Activated CD4-positive, alpha-beta T cell treated with anti-CD3 and anti-CD28 coated beads, Interleukin-2, amount 10 ng/mL, durations not matched to agents 24 days and 14 days (primary cell): ENCODE measurements at regions of chr11 and their contacts with region 1.

Region 1: DNA sequence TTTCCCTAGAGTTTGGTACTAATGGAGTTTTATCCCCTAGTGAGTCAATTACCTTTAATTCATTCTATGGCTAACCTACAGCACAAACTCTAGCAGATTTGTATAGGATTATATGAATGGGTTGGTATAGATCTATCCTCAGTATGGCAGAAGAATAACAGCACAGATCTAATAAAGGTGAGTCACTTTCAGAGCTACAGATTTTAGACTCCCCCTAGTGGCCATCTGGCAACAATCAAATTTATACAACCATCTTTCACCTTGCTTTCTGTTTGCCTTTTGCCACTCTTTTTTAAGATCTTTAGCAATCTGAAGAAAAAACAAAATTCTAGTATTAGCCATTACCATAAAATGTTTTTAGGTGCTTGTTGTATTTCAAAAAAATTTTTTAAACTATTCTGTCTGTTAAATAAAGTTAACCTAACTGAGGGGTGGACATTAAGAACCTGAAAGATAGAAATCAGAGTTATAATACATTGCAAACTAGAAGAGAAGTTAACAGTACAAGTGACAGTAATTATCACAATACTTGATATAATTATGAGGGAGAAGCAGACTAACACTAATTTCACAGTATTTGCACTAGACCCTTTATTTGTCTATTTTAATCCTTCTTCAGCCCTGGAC is 25.8 kb downstream of the DDIAS start:
- DNase-seq: peak; percentile 78
- H3K4me3 Mint-ChIP-seq: no peak overlapping the region
- H3K27ac Mint-ChIP-seq: no peak overlapping the region
- H3K4me1 Mint-ChIP-seq: peaks cover 15% of the 10 kb centered on the region
- H3K27me3 Mint-ChIP-seq: no peaks in the 10 kb centered on the region

Region 2: DNA sequence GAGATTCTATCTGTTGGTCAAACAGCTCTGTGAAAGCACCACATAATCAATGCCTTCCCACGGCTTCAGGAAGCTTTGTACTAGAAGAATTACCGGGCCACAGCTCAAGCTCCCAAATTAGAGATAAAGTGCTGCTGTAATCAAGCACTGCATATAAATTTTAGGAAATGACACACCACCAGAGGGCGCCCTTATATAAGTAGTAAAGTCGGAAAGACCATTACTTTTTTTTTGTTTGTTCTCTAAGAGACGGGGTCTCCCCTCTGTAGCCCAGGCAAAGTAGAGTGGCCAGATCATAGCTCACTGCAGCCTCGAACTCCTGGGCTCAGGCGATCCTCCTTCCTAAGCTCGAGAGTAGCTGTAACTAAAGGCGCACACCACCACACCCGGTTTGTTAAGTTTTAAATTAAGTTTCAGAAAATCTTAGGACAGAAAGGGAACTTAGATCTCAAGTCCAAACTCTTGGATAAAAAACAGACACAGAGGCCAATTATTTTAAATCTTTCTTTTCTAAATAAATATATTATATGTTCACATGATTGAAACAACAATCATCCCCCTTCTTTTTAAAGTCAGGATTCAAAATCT is 59.8 kb before region 1 on chr11:
- intact Hi-C with region 1: loop called (anchors 2 kb)
- DNase-seq: peak; percentile 93
- H3K4me3 Mint-ChIP-seq: no peak overlapping the region
- H3K27ac Mint-ChIP-seq: no peak overlapping the region
- H3K4me1 Mint-ChIP-seq: peaks cover 6% of the 10 kb centered on the region
- H3K27me3 Mint-ChIP-seq: peaks cover 2% of the 10 kb centered on the region

Region 3: GRCh38 chr11:82906244-82906654 is 21.1 kb before region 1 on chr11:
- intact Hi-C with region 1: loop called (anchors 2 kb)
- DNase-seq: no peak
- H3K4me3 Mint-ChIP-seq: no peak overlapping the region
- H3K27ac Mint-ChIP-seq: no peak overlapping the region
- H3K4me1 Mint-ChIP-seq: peaks cover 42% of the 10 kb centered on the region
- H3K27me3 Mint-ChIP-seq: no peaks in the 10 kb centered on the region